Activated CD4-positive, alpha-beta T cell treated with anti-CD3 and anti-CD28 coated beads for 36 hours (primary cell): ENCODE measurements at regions of chr10 and their contacts with region 1.

Region 1: GRCh38 chr10:119080521-119081260 is at the start of gene EIF3A:
- DNase-seq: peak; percentile 95
- ATAC-seq: peak; percentile 82
- H3K4me3 Mint-ChIP-seq: peak within 1 kb of the TSS; percentile 99
- H3K27ac Mint-ChIP-seq: peak within 1 kb of the TSS; percentile 94
- H3K4me1 Mint-ChIP-seq: peaks cover 26% of the 10 kb centered on the region
- H3K27me3 Mint-ChIP-seq: no peaks in the 10 kb centered on the region
- total RNA-seq, gene EIF3A: 132 to 150 TPM

Region 2: DNA sequence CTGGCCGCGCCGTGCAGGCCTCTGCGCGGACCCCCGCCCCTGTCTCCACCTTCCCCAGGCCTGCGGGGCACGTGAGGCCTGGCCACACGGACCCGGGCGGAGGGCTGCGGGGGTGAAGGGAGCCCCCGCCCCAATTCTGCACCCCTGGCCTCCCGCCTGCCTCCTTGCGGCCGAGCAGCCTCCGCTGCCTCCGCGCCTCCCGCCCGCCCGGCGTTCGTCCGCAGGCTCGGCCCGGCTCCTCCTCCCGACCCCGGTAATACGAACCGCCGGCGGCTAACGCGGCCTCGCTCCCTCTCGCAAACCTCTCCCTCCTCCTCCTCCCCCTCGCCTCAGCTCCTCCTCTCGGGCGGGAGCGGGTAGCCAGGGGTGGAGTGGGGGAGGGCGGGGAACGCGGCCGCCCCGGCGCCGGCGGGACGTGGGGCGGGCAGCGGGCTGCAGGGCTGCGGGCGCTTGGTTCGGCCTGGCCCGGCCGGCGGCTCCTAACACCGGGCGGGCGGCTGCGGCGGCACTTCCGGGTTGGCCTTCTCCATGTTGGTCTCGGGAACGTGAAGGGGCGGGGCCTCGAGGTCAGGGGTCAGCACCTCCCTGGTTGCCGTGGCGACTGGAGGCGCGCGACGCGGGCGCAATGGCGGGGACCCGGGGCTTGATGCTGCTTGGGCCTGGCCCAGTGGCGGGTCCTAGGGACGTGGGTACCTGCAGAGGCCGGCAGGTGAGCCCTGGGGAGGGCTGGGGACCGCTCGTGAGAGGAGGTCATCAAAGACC is 1034.1 kb before region 1 on chr10 and contains the start of gene RAB11FIP2:
- CTCF ChIA-PET with region 1: no interaction called
- POLR2A ChIA-PET with region 1: no interaction called
- intact Hi-C with region 1: loop called in 1 of 2 experiments (anchors 5 kb)
- DNase-seq: peak; percentile 97
- ATAC-seq: peak; percentile 94
- H3K4me3 Mint-ChIP-seq: peak within 1 kb of the TSS; percentile 84
- H3K27ac Mint-ChIP-seq: peak within 1 kb of the TSS; percentile 88
- H3K4me1 Mint-ChIP-seq: peaks cover 28% of the 10 kb centered on the region
- H3K27me3 Mint-ChIP-seq: no peaks in the 10 kb centered on the region
- total RNA-seq, gene RAB11FIP2: 9.7 to 12.5 TPM

Region 3: GRCh38 chr10:119103903-119104652 is 23.4 kb after region 1 on chr10 and contains the start of gene DENND10:
- CTCF ChIA-PET with region 1: interaction called, 3 read pairs
- POLR2A ChIA-PET with region 1: interaction called, 8 read pairs
- intact Hi-C with region 1: loop called (anchors 1 kb)
- DNase-seq: peak; percentile 90
- ATAC-seq: peak; percentile 92
- H3K4me3 Mint-ChIP-seq: peak within 1 kb of the TSS; percentile 70
- H3K27ac Mint-ChIP-seq: no peak within 1 kb of the TSS
- H3K4me1 Mint-ChIP-seq: peaks cover 10% of the 10 kb centered on the region
- H3K27me3 Mint-ChIP-seq: no peaks in the 10 kb centered on the region
- total RNA-seq, gene DENND10: 20.5 to 21.9 TPM

Region 4: DNA sequence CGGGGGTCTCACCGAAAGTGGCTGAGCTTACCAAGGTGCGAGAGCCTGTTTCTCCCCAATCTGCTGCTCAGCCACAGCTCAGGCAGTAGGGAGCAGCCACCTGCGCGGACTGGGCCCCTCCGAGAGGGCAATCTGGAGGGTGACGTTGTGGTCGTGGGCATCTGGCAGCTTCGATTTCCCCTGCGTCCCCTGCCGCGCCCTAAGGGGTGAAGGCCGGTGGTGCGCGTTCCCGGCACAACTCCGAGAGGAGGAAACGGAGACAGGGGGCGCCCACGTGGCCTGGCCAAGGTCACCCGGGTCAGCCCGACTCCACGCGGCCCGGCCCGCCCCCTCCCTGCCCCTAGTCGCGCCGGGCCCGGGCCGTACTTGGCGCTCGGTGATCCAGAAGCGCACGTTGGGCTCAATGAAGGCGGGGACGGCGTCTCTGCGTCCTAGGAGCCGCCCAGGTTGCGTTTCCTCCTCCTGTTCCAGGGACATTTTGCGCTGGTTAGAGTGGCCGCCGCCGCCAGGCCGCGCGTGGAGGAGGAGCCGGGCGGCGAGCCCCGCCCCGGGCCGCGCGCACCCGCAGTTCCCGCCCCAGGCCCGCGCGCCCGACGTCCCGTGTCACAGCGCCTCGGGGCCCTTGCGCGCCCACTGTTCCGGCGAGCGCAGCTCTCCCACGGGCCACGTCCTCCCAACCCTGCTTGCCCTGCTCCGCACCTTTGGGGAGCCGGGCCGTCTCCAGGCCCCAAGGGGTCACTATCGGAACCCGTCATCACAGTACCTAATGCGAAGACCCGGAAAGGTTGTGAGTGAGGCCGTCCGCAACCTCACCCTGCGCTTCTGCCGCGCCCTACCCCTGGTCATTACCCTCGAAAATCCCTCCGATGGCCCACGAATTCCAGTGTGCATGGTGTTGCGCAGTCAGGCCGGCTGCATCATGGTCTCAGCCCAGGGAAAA is 84.8 kb after region 1 on chr10 and contains the start of gene SFXN4:
- CTCF ChIA-PET with region 1: no interaction called
- POLR2A ChIA-PET with region 1: interaction called, 3 read pairs
- intact Hi-C with region 1: loop called in 1 of 2 experiments (anchors 1 kb)
- DNase-seq: peak; percentile 87
- ATAC-seq: peak; percentile 94
- H3K4me3 Mint-ChIP-seq: peak within 1 kb of the TSS; percentile 86
- H3K27ac Mint-ChIP-seq: peak within 1 kb of the TSS; percentile 94
- H3K4me1 Mint-ChIP-seq: peaks cover 40% of the 10 kb centered on the region
- H3K27me3 Mint-ChIP-seq: no peaks in the 10 kb centered on the region
- total RNA-seq, gene SFXN4: 38.7 to 44.7 TPM

Region 5: DNA sequence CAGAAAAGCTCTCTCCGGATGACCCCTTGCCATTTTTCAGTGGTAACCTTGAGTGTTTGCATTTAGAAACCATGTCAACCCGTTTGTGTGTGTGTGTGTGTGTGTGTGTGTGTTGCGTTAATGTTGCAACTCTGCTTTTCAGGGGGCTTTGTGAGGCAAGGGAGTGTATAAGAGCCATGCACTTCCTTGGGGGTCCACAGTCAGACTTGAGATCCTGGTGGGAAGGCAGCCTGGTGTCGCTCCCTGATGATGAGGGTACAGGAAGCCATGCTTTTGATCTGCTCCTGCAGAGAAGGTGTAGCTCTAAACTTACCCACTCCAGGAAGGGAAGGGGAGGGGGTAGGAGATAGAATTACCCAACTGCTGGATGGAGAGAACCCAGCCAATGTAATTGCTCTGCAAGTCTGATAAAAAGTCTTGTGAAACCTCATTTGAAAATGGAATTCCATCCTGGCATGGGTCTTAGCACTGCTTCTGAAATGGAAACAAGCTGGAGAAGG is 137.3 kb after region 1 on chr10:
- CTCF ChIA-PET with region 1: no interaction called
- POLR2A ChIA-PET with region 1: no interaction called
- intact Hi-C with region 1: no loop called
- DNase-seq: no peak
- ATAC-seq: no peak
- H3K4me3 Mint-ChIP-seq: no peak overlapping the region
- H3K27ac Mint-ChIP-seq: no peak overlapping the region
- H3K4me1 Mint-ChIP-seq: peaks cover 37% of the 10 kb centered on the region
- H3K27me3 Mint-ChIP-seq: no peaks in the 10 kb centered on the region

Region 6: DNA sequence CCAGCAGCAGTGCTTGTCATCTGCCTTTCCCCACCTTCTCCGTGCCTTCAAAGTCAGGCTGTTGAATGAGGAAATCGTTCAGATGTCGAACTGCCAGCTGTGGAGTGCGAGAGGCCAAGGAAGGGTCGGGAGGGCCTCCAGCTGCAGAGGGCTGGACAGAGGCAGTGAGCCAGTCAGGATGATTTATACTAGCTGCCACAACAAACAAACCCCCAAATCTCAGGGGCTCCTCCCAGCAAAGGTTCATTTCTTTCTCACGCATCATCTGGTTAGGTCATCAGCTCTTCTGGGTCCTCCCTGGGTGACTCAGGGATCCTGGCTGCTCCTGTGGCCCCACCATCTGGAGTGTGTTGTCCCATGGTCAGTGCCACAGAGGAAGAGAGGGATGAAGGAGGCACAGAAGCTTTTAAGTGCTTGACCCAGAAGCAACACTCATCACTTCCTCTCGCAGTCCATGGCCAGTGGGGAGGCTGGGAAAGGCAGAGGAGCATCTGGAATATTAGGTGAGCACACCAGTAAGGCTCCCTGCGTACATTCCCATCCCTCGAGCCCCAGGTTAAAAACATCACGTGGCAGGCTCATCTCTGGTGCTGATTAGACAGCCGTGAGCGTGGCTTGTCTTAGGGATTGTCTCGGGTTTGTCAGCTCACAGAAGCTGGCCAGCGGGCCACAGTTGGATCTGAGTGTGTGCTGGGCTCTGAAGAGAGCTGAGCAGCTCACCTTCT is 321.1 kb after region 1 on chr10:
- CTCF ChIA-PET with region 1: no interaction called
- POLR2A ChIA-PET with region 1: no interaction called
- intact Hi-C with region 1: no loop called
- DNase-seq: no peak
- ATAC-seq: no peak
- H3K4me3 Mint-ChIP-seq: no peak overlapping the region
- H3K27ac Mint-ChIP-seq: peak overlapping the region; percentile 13
- H3K4me1 Mint-ChIP-seq: peaks cover 7% of the 10 kb centered on the region
- H3K27me3 Mint-ChIP-seq: no peaks in the 10 kb centered on the region

Region 7: GRCh38 chr10:119596537-119597404 is 516.1 kb after region 1 on chr10 and contains the start of gene TIAL1:
- CTCF ChIA-PET with region 1: no interaction called
- POLR2A ChIA-PET with region 1: interaction called, 4 read pairs
- intact Hi-C with region 1: loop called (anchors 1 to 10 kb)
- DNase-seq: peak; percentile 96
- ATAC-seq: peak; percentile 90
- H3K4me3 Mint-ChIP-seq: peak within 1 kb of the TSS; percentile 92
- H3K27ac Mint-ChIP-seq: peak within 1 kb of the TSS; percentile 93
- H3K4me1 Mint-ChIP-seq: peaks cover 49% of the 10 kb centered on the region
- H3K27me3 Mint-ChIP-seq: no peaks in the 10 kb centered on the region
- total RNA-seq, gene TIAL1: 187 to 197 TPM

Region 8: DNA sequence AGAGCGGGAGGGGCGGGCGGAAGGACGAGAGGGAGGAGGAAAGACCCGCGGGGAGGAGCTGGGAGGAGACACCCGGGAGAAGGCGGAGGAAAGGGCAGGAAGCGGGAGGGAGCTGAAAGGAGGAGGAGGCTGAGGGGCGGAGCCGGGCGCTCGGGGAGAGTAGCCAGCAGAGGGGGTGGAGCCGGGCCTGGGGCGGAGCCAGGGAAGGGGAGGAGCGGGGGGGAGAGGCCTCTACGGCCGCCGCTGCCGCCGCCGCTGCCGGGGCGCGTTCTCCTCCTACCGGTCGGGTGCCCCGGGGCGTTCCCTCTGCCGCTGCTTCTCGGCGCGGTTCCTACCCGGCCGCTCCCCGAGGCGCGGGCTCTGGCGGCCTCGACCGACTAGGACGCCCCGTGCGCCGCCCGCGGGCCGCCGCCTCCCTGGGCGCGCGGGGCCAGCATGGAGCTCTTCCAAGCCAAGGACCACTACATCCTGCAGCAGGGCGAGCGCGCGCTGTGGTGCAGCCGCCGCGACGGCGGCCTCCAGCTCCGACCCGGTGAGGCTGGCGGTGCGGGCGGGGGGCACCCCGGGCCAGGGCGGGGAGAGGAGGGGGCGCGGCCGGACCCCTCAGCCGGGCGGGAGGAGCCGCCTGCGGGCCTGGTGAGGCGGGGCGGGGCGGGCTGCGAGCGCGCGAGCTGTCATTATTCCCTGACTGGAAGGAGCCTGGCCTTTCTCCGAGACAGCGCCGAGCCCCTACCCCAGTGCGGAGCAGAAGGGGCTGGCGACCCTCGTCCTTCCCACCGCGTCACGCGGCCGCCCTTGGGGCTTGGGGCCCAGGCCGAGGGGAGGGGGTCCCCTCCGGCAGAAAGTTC is 645.4 kb after region 1 on chr10 and contains the start of gene INPP5F:
- CTCF ChIA-PET with region 1: no interaction called
- POLR2A ChIA-PET with region 1: no interaction called
- intact Hi-C with region 1: loop called in 1 of 2 experiments (anchors 5 kb)
- DNase-seq: peak; percentile 100
- ATAC-seq: peak; percentile 95
- H3K4me3 Mint-ChIP-seq: peak within 1 kb of the TSS; percentile 86
- H3K27ac Mint-ChIP-seq: peak within 1 kb of the TSS; percentile 73
- H3K4me1 Mint-ChIP-seq: peaks cover 47% of the 10 kb centered on the region
- H3K27me3 Mint-ChIP-seq: no peaks in the 10 kb centered on the region
- total RNA-seq, gene INPP5F: 10.9 to 12.6 TPM